ENCODE measurements at regions of chr4 and their contacts with region 1.

Region 1: GRCh38 chr4:58368221-58368620 is 1258.0 kb upstream of the IGFBP7 start:
- DNase-seq: no peak
- ATAC-seq: no peak
- H3K4me3 ChIP-seq: no peak overlapping the region
- H3K27ac ChIP-seq: no peak overlapping the region
- H3K4me1 ChIP-seq: no peaks in the 10 kb centered on the region
- H3K27me3 ChIP-seq: no peaks in the 10 kb centered on the region
- CTCF ChIP-seq: no peak
- EP300 ChIP-seq: no peak
- POLR2A ChIP-seq: no peak
- RAD21 ChIP-seq: no peak

Region 2: GRCh38 chr4:57905965-57906364 is 462.3 kb before region 1 on chr4:
- CTCF ChIA-PET with region 1: no interaction called
- POLR2A ChIA-PET with region 1: no interaction called
- RAD21 ChIA-PET with region 1: no interaction called
- SMC1A ChIA-PET with region 1: no interaction called
- in situ Hi-C with region 1: no loop called
- intact Hi-C with region 1: no loop called
- DNase-seq: no peak
- ATAC-seq: no peak
- H3K4me3 ChIP-seq: no peak overlapping the region
- H3K27ac ChIP-seq: no peak overlapping the region
- H3K4me1 ChIP-seq: no peaks in the 10 kb centered on the region
- H3K27me3 ChIP-seq: no peaks in the 10 kb centered on the region
- CTCF ChIP-seq: no peak
- EP300 ChIP-seq: no peak
- POLR2A ChIP-seq: no peak
- RAD21 ChIP-seq: no peak

Region 3: GRCh38 chr4:58313444-58313843 is 54.8 kb before region 1 on chr4:
- CTCF ChIA-PET with region 1: no interaction called
- POLR2A ChIA-PET with region 1: no interaction called
- RAD21 ChIA-PET with region 1: no interaction called
- SMC1A ChIA-PET with region 1: no interaction called
- in situ Hi-C with region 1: loop called (anchors 10 kb)
- intact Hi-C with region 1: no loop called
- DNase-seq: no peak
- ATAC-seq: no peak
- H3K4me3 ChIP-seq: no peak overlapping the region
- H3K27ac ChIP-seq: no peak overlapping the region
- H3K4me1 ChIP-seq: no peaks in the 10 kb centered on the region
- H3K27me3 ChIP-seq: no peaks in the 10 kb centered on the region
- CTCF ChIP-seq: no peak
- EP300 ChIP-seq: no peak
- POLR2A ChIP-seq: no peak
- RAD21 ChIP-seq: no peak

Measured in GM12878 (cell line).